ENCODE measurements at regions of chr16 and their contacts with region 1.

Region 1: DNA sequence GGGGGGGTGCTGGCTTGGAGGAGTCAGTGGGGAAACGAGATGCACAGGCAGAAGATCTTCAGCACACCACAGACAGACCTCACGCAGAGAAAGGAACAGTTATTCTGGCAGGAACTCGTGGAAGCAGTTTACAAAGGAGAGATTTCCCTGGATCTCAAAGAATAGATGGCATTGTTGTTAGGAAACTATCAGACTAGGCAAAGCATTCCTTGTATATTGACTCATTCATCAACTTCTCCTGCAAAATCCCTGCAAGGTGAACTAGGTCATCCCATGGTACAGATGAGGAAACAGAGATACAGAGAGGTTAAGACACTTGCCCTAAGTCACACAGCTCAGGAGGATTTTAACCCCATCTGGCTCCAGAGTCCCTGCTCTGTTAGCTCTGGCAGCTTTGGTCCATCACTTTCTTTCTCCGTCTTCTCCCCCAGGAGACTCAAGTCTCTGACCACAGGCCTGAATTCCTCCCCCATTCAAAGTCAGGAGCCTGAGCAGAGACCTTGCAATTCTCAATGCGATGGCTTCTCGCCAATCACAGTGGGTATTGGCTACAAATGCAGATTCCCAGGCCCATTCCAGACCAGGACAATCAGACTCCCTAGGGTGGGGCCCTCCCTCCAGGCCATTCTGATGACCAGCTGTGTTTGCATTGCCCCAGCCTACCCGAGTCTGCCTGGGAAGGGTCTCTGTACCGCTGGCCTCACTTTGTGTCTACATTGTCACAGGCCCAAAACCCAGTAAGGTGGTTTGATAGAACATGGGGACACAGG is 56.4 kb downstream of the LITAF start:
- DNase-seq: no peak
- H3K4me3 ChIP-seq: no peak overlapping the region
- H3K27ac ChIP-seq: no peak overlapping the region
- H3K4me1 ChIP-seq: peaks cover 0 to 10% (median 3%) of the 10 kb centered on the region in 4 experiments; a peak in 4 of 7 replicates
- H3K27me3 ChIP-seq: no peaks in the 10 kb centered on the region
- CTCF ChIP-seq: no peak
- EP300 ChIP-seq: no peak
- POLR2A ChIP-seq: no peak
- RAD21 ChIP-seq: no peak

Region 2: GRCh38 chr16:11485676-11486075 is 44.7 kb before region 1 on chr16:
- CTCF ChIA-PET with region 1: no interaction called
- POLR2A ChIA-PET with region 1: no interaction called
- DNase-seq: no peak
- H3K4me3 ChIP-seq: no peak overlapping the region
- H3K27ac ChIP-seq: no peak overlapping the region
- H3K4me1 ChIP-seq: no peaks in the 10 kb centered on the region
- H3K27me3 ChIP-seq: no peaks in the 10 kb centered on the region
- CTCF ChIP-seq: no peak
- EP300 ChIP-seq: no peak
- POLR2A ChIP-seq: no peak
- RAD21 ChIP-seq: no peak

Region 3: GRCh38 chr16:11506741-11507305 is 23.5 kb before region 1 on chr16:
- CTCF ChIA-PET with region 1: interaction called, 10 read pairs
- POLR2A ChIA-PET with region 1: interaction called, 4 read pairs
- DNase-seq: no peak
- H3K4me3 ChIP-seq: no peak overlapping the region
- H3K27ac ChIP-seq: no peak overlapping the region
- H3K4me1 ChIP-seq: peaks cover 2 to 16% (median 7%) of the 10 kb centered on the region in 4 experiments
- H3K27me3 ChIP-seq: no peaks in the 10 kb centered on the region
- CTCF ChIP-seq: peak in 2 of 3 experiments; percentile 7 to 29; a peak in 2 of 4 replicates
- EP300 ChIP-seq: no peak
- POLR2A ChIP-seq: no peak
- RAD21 ChIP-seq: no peak

Region 4: GRCh38 chr16:11563493-11564040 is 33.2 kb after region 1 on chr16:
- CTCF ChIA-PET with region 1: interaction called, 12 read pairs
- POLR2A ChIA-PET with region 1: no interaction called
- DNase-seq: no peak
- H3K4me3 ChIP-seq: no peak overlapping the region
- H3K27ac ChIP-seq: no peak overlapping the region
- H3K4me1 ChIP-seq: peaks cover 3 to 14% (median 6%) of the 10 kb centered on the region in 4 experiments
- H3K27me3 ChIP-seq: no peaks in the 10 kb centered on the region
- CTCF ChIP-seq: no peak
- EP300 ChIP-seq: no peak
- POLR2A ChIP-seq: no peak
- RAD21 ChIP-seq: no peak

Region 5: DNA sequence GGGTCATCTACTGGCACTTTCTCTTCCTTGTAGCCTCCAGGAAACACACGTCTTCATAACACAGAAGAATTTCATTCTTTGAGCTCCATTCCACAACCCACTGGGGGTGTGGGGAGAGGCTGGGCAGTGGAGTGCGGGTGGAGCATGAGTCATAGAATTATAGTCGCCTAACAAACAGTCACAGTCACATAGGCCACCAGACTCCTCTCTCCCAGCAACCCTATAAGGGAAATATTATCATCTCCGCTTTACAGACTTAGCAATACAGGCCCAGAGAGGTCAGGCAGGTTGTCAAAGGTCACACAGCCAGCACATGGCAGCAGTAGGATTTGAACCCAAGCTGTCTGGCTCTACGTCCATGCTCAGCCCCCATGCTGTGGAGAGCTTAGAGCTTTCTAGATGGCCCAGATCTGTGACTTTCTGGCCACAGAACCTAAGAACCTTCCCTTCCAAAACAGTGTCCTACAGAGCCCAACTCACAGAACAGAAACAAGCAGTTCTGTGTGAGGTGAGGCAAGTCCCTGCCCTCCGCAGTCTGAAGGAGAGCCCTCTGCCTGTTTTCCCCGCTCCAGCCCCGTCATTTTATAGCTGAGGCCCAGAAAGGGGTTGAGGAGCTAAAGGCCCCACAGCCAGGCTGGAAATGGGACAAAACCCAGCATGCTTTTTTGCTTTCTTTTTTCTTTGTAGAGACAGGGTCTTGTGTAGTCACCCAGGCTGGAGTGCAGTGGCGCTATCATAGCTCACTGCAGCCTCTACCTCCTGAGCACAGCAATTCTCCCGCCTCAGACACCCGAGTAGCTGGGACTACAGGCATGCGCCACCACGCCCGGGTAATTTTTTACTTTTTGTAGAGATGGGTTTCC is 67.1 kb after region 1 on chr16:
- CTCF ChIA-PET with region 1: interaction called, 20 read pairs
- POLR2A ChIA-PET with region 1: no interaction called
- DNase-seq: no peak
- H3K4me3 ChIP-seq: no peak overlapping the region
- H3K27ac ChIP-seq: 0 out of 2 replicates have a peak overlapping the region, but pooled peaks have one; percentile 5
- H3K4me1 ChIP-seq: peaks cover 11 to 30% (median 18%) of the 10 kb centered on the region in 4 experiments
- H3K27me3 ChIP-seq: no peaks in the 10 kb centered on the region
- CTCF ChIP-seq: no peak
- EP300 ChIP-seq: no peak
- POLR2A ChIP-seq: no peak
- RAD21 ChIP-seq: no peak

Region 6: GRCh38 chr16:11675561-11676511 is 145.5 kb after region 1 on chr16:
- CTCF ChIA-PET with region 1: interaction called, 16 read pairs
- POLR2A ChIA-PET with region 1: interaction called, 3 read pairs
- DNase-seq: no peak
- H3K4me3 ChIP-seq: no peak overlapping the region
- H3K27ac ChIP-seq: no peak overlapping the region
- H3K4me1 ChIP-seq: peaks cover 0 to 18% (median 9%) of the 10 kb centered on the region in 4 experiments; a peak in 5 of 7 replicates
- H3K27me3 ChIP-seq: no peaks in the 10 kb centered on the region; a peak in 1 of 7 replicates
- CTCF ChIP-seq: 0 out of 4 replicates have a peak, but pooled peaks of 1 of the 3 experiments have one; percentile 4
- EP300 ChIP-seq: no peak
- POLR2A ChIP-seq: no peak
- RAD21 ChIP-seq: peak in 1 of 2 experiments; percentile 22; a peak in 1 of 4 replicates

Measured in H1 (cell line).